Activated CD4-positive, alpha-beta T cell treated with anti-CD3 and anti-CD28 coated beads for 36 hours (primary cell): ENCODE measurements at regions of chr2 and their contacts with region 1.

Region 1: DNA sequence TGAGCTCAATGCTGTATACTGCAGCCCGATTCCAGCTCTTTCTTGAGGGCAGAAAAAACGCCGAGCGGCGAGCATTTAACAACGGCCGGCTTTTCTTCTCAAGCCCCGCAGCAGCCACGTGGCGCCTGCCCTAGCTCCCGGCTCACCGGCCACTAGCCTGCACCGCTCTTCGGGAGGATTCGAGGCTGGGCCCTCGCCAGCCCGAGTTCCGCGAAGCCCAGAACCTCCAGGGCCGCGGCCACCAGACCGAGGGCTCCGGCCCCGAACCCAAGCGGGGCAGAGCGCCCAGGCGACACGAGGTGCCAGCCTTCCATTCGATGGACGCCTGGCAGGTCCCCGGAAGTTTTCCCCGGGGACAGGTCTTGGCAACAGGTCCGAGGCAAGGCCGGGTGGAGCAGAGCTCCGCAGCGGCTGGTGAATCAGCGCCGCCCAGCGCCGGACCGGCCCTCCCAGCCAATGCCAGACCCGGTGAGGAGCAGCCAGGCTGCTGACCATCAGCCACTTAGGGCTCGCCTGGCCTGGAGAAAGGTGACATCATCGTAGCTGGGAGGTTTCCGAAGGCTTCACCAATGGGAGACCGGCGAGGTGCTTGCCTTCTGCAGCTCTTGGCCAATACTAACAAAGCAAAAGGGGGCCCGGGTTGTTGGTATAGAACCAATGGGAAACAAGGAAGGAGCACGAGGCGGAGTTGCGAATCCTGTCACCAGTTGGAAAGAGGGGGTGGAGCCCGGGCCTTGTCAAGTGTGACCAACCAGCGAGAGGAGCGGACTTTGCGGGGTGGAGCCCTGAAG is 544 bp upstream of the MXD1 start:
- DNase-seq: peak; percentile 100
- ATAC-seq: peak; percentile 96
- H3K4me3 Mint-ChIP-seq: peak overlapping the region; percentile 81
- H3K27ac Mint-ChIP-seq: peak overlapping the region; percentile 89
- H3K4me1 Mint-ChIP-seq: peaks cover 35% of the 10 kb centered on the region
- H3K27me3 Mint-ChIP-seq: no peaks in the 10 kb centered on the region

Region 2: DNA sequence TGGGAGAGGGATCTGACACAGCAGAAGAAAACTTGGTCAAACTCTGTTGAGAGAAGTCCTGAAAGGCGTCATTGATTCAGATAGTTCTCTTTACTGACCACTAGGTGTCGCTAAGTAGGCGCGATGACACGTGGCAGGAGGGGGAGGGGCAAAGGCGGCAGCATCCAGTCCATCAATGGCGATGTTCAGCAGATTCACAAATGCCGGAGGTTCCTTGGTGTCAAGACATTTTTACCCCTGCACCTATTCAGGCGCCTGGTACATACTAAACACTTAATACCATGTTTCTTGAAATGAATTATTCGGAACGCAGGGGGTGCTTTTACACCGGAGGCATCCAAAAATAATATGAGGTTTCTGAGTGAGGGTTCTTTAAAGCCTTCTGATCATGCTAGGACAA is 1552.3 kb before region 1 on chr2:
- CTCF ChIA-PET with region 1: no interaction called
- POLR2A ChIA-PET with region 1: no interaction called
- intact Hi-C with region 1: no loop called
- DNase-seq: peak; percentile 91
- ATAC-seq: peak; percentile 92
- H3K4me3 Mint-ChIP-seq: peak overlapping the region; percentile 17
- H3K27ac Mint-ChIP-seq: peak overlapping the region; percentile 40
- H3K4me1 Mint-ChIP-seq: peaks cover 11% of the 10 kb centered on the region
- H3K27me3 Mint-ChIP-seq: peaks cover 15% of the 10 kb centered on the region

Region 3: GRCh38 chr2:69589973-69590652 is 324.3 kb before region 1 on chr2:
- CTCF ChIA-PET with region 1: no interaction called
- POLR2A ChIA-PET with region 1: no interaction called
- intact Hi-C with region 1: no loop called
- DNase-seq: no peak
- ATAC-seq: peak; percentile 50
- H3K4me3 Mint-ChIP-seq: no peak overlapping the region
- H3K27ac Mint-ChIP-seq: peak overlapping the region; percentile 76
- H3K4me1 Mint-ChIP-seq: peaks cover 71% of the 10 kb centered on the region
- H3K27me3 Mint-ChIP-seq: no peaks in the 10 kb centered on the region

Region 4: DNA sequence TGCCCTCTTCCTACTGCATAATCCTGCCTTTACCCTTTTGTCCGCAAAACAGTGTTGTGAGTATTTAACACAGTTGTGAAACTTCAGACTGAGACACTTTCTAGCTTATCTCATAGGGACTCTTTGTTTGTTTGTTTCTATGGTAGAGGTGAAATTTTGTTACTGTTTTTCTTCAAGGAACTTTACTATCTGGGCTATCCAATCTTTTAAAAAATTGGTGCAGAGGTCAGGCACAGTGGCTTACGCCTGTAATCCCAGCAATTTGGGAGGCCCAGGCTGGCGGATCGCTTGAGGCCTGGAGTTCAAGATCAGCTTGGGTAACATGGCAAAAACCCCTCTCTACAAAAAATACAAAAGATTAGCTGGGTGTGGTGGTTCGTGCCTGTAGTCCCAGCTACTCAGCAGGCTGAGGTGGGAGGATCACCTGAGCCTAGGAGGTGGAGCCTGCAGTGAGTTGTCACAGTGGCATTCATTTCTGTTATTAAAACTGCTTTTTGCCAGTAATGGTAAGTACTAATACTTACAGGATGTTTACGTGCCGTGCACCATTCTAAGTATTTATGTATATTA is 66.1 kb before region 1 on chr2:
- CTCF ChIA-PET with region 1: no interaction called
- POLR2A ChIA-PET with region 1: no interaction called
- intact Hi-C with region 1: no loop called
- DNase-seq: no peak
- ATAC-seq: no peak
- H3K4me3 Mint-ChIP-seq: no peak overlapping the region
- H3K27ac Mint-ChIP-seq: no peak overlapping the region
- H3K4me1 Mint-ChIP-seq: peaks cover 6% of the 10 kb centered on the region
- H3K27me3 Mint-ChIP-seq: no peaks in the 10 kb centered on the region

Region 5: GRCh38 chr2:69902213-69902922 is 12.0 kb before region 1 on chr2:
- CTCF ChIA-PET with region 1: interaction called, 28 read pairs
- POLR2A ChIA-PET with region 1: no interaction called
- intact Hi-C with region 1: no loop called
- DNase-seq: peak; percentile 27
- ATAC-seq: peak; percentile 24
- H3K4me3 Mint-ChIP-seq: peak overlapping the region; percentile 68
- H3K27ac Mint-ChIP-seq: peak overlapping the region; percentile 86
- H3K4me1 Mint-ChIP-seq: peaks cover 45% of the 10 kb centered on the region
- H3K27me3 Mint-ChIP-seq: no peaks in the 10 kb centered on the region

Region 6: DNA sequence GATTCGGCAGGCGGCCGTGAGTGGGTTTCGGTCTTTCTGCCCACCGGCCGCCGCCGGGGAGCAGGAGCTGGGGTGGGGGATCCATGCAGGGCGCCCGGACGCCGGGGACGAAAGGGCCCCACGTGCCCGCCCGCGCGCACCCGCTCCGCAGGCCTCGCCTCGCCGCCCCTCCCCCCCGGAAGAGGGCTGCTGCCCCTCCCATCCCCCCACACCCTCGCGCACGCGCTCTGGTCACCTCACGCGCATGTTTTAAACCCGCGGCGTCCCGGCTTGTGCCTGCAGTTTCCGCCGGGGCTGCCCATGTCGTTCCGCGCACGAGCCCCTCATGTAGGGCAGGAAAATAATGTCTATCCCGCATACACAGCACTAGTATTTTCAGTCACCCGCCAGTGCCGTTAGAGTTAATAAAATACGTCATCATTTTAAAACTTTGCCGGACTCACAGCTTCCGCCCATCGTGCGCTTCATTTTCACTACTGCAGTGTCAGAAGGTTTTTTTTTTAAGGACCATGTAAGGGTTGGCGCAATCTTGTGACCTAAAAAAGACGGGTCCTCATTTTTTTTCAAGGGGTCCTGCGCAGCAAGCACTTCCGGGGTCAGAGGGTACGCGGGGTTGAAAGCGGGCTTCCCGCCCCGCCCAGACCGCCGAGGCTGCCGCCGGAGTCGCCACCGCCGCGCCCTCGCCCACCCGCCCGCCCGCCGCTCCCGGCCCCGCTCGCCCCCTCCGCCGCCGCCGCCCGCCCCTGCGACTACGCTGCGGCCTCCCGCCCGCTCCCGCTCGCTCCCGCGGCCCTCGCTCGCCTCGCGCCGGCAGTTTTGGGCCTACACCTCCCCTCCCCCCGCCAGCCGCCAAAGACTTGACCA is 172.7 kb after region 1 on chr2 and contains the start of gene PCBP1:
- CTCF ChIA-PET with region 1: interaction called, 43 read pairs
- POLR2A ChIA-PET with region 1: interaction called, 32 read pairs
- intact Hi-C with region 1: loop called (anchors 1 kb)
- DNase-seq: peak; percentile 98
- ATAC-seq: peak; percentile 37
- H3K4me3 Mint-ChIP-seq: peak within 1 kb of the TSS; percentile 100
- H3K27ac Mint-ChIP-seq: peak within 1 kb of the TSS; percentile 100
- H3K4me1 Mint-ChIP-seq: peaks cover 52% of the 10 kb centered on the region
- H3K27me3 Mint-ChIP-seq: no peaks in the 10 kb centered on the region
- total RNA-seq, gene PCBP1: 417 to 450 TPM

Region 7: DNA sequence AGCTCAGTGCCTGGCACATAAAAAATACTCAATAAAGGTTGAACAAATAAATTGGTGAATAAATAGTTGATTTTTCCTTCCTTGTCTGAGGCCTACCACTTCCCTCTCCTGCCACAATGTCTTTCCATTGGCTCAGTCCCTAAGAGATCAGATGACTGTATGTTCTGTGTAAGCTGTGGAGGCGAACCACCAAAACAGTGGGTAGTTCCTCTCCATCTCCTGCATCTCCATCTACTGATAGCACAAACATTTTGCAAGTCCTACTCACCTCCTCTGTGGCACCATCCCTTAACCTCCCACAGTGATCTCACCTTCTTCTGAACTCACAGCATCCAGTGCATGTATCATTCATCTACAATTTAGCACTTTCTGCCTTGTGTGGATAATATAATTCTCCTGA is 223.2 kb after region 1 on chr2:
- CTCF ChIA-PET with region 1: interaction called, 71 read pairs
- POLR2A ChIA-PET with region 1: interaction called, 28 read pairs
- intact Hi-C with region 1: loop called (anchors 1 kb)
- DNase-seq: peak; percentile 67
- ATAC-seq: peak; percentile 23
- H3K4me3 Mint-ChIP-seq: peak overlapping the region; percentile 21
- H3K27ac Mint-ChIP-seq: peak overlapping the region; percentile 100
- H3K4me1 Mint-ChIP-seq: peaks cover 81% of the 10 kb centered on the region
- H3K27me3 Mint-ChIP-seq: no peaks in the 10 kb centered on the region

Region 8: GRCh38 chr2:70248181-70248847 is 333.9 kb after region 1 on chr2 and contains the start of gene TIA1:
- CTCF ChIA-PET with region 1: interaction called, 3 read pairs
- POLR2A ChIA-PET with region 1: no interaction called
- intact Hi-C with region 1: loop called (anchors 1 to 10 kb)
- DNase-seq: peak; percentile 99
- ATAC-seq: peak; percentile 98
- H3K4me3 Mint-ChIP-seq: peak within 1 kb of the TSS; percentile 98
- H3K27ac Mint-ChIP-seq: peak within 1 kb of the TSS; percentile 97
- H3K4me1 Mint-ChIP-seq: peaks cover 30% of the 10 kb centered on the region
- H3K27me3 Mint-ChIP-seq: no peaks in the 10 kb centered on the region
- total RNA-seq, gene TIA1: 85.4 to 98.3 TPM